ENCODE measurements at regions of chr5 and their contacts with region 1.

Region 1: DNA sequence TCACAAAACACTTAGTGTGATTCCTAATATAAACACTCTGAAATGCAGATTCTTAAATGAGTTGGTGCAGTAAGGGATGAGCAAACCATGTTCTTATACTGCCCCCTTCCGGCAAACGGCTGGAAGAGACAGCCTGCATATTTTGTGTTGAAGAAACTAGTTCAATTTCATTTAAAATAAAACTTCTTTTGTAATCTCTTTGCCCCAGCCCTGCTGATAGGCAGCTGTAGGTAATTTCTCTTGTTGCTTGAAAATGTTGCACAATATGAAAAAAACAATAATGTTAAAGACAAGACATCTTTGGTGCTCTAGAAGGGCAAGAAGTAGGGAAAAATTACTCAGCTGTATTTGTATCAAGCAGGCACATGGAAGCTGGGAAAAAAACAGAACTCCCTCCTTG is 89.7 kb upstream of the CCNG1 start:
- DNase-seq: peak; percentile 70
- ATAC-seq: no peak
- H3K4me3 Mint-ChIP-seq: no peak overlapping the region
- H3K27ac Mint-ChIP-seq: no peak overlapping the region
- H3K4me1 Mint-ChIP-seq: no peaks in the 10 kb centered on the region
- H3K27me3 Mint-ChIP-seq: peaks cover 5% of the 10 kb centered on the region

Region 2: DNA sequence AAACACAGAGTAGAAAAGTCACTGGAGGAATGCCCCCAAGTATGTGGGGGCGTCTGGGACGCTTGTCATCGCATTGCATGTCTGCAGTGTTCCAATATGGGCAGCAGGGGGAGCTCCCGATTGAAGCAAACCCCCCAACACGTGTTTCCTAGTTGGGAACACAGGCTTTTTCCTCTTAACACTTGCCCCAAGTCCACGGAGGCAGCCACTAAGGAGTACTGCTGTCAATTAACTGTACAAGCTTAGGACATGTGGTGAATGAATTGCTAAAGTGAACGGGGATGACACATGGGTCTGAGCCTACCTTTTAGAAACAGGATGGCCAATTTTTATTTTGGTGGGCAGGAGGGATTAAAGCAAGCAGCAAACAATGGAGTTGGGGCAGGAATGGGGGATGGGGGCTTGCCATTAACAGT is 1803.3 kb before region 1 on chr5:
- CTCF ChIA-PET with region 1: no interaction called
- POLR2A ChIA-PET with region 1: no interaction called
- intact Hi-C with region 1: loop called (anchors 1 to 10 kb)
- DNase-seq: peak; percentile 56
- ATAC-seq: peak; percentile 42
- H3K4me3 Mint-ChIP-seq: no peak overlapping the region
- H3K27ac Mint-ChIP-seq: no peak overlapping the region
- H3K4me1 Mint-ChIP-seq: peaks cover 7% of the 10 kb centered on the region
- H3K27me3 Mint-ChIP-seq: peaks cover 58% of the 10 kb centered on the region

Region 3: GRCh38 chr5:161851691-161852299 is 1495.9 kb before region 1 on chr5:
- CTCF ChIA-PET with region 1: no interaction called
- POLR2A ChIA-PET with region 1: no interaction called
- intact Hi-C with region 1: loop called in 1 of 2 experiments (anchors 5 kb)
- DNase-seq: no peak
- ATAC-seq: no peak
- H3K4me3 Mint-ChIP-seq: no peak overlapping the region
- H3K27ac Mint-ChIP-seq: no peak overlapping the region
- H3K4me1 Mint-ChIP-seq: no peaks in the 10 kb centered on the region
- H3K27me3 Mint-ChIP-seq: peaks cover 22% of the 10 kb centered on the region

Region 4: GRCh38 chr5:163306421-163306820 is 41.2 kb before region 1 on chr5:
- CTCF ChIA-PET with region 1: interaction called, 11 read pairs
- POLR2A ChIA-PET with region 1: no interaction called
- intact Hi-C with region 1: no loop called
- DNase-seq: no peak
- ATAC-seq: no peak
- H3K4me3 Mint-ChIP-seq: no peak overlapping the region
- H3K27ac Mint-ChIP-seq: no peak overlapping the region
- H3K4me1 Mint-ChIP-seq: no peaks in the 10 kb centered on the region
- H3K27me3 Mint-ChIP-seq: peaks cover 4% of the 10 kb centered on the region

Measured in activated CD4-positive, alpha-beta T cell treated with anti-CD3 and anti-CD28 coated beads for 36 hours (primary cell).